Ascending aorta (tissue), 2 donors: ENCODE measurements at regions of chr3 and their contacts with region 1.

Region 1: GRCh38 chr3:113745273-113746068 is 578 bp downstream of the NAA50 start:
- DNase-seq: peak; percentile 59 to 88
- H3K4me3 ChIP-seq: peak overlapping the region; percentile 97 to 100
- H3K27ac ChIP-seq: peak overlapping the region; percentile 98 to 100
- H3K4me1 ChIP-seq: peaks cover 6 to 29% of the 10 kb centered on the region in 2 donors
- H3K27me3 ChIP-seq: no peaks in the 10 kb centered on the region
- CTCF ChIP-seq: peak; percentile 44 to 80 (median 65)

Region 2: DNA sequence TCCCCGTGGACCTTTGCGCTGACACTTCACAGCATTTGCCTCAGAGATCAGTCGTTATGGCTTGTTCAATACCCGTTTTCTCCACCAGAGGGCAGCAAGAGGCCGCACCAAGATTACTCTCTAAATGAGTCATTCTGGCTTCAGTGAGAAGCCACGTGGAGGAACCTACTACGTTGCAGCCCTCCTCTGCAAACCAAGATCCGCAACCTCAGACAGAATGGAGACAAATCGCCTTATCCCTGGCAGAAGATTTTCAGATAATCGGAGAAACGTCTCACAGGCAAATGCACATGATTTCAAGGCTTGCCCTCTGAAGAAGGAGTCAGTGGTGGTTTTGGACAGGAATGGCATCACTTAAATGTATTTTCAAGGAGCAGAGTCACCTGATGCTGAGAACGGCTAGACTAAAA is 694.2 kb before region 1 on chr3:
- intact Hi-C with region 1: loop called (anchors 10 kb)
- DNase-seq: peak; percentile 52 to 94
- H3K4me3 ChIP-seq: peak overlapping the region in 1 of 2 donors; percentile 27
- H3K27ac ChIP-seq: peak overlapping the region in 1 of 2 donors; percentile 14
- H3K4me1 ChIP-seq: peaks cover 0 to 6% of the 10 kb centered on the region in 2 donors
- H3K27me3 ChIP-seq: no peaks in the 10 kb centered on the region
- CTCF ChIP-seq: peak; percentile 90 to 93 (median 93)

Region 3: GRCh38 chr3:113696658-113697499 is 48.6 kb before region 1 on chr3:
- intact Hi-C with region 1: loop called (anchors 1 kb)
- DNase-seq: peak; percentile 98 to 100
- H3K4me3 ChIP-seq: peak overlapping the region; percentile 93 to 98
- H3K27ac ChIP-seq: peak overlapping the region; percentile 98 to 99
- H3K4me1 ChIP-seq: peaks cover 0 to 17% of the 10 kb centered on the region in 2 donors
- H3K27me3 ChIP-seq: no peaks in the 10 kb centered on the region
- CTCF ChIP-seq: peak in 1 of 3 experiments; percentile 22

Region 4: GRCh38 chr3:113764698-113765097 is 19.2 kb after region 1 on chr3:
- intact Hi-C with region 1: no loop called
- DNase-seq: no peak
- H3K4me3 ChIP-seq: no peak overlapping the region
- H3K27ac ChIP-seq: no peak overlapping the region
- H3K4me1 ChIP-seq: no peaks in the 10 kb centered on the region
- H3K27me3 ChIP-seq: no peaks in the 10 kb centered on the region
- CTCF ChIP-seq: no peak

Region 5: GRCh38 chr3:113947372-113948014 is 202.0 kb after region 1 on chr3 and contains the start of gene ZDHHC23:
- intact Hi-C with region 1: loop called (anchors 2 kb)
- DNase-seq: peak in 1 of 2 donors; percentile 85
- H3K4me3 ChIP-seq: peak within 1 kb of the TSS; percentile 70 to 82
- H3K27ac ChIP-seq: peak within 1 kb of the TSS; percentile 60 to 68
- H3K4me1 ChIP-seq: no peaks in the 10 kb centered on the region
- H3K27me3 ChIP-seq: no peaks in the 10 kb centered on the region
- CTCF ChIP-seq: no peak
- total RNA-seq, gene ZDHHC23: 4.4 TPM

Region 6: GRCh38 chr3:114152519-114153151 is 407.2 kb after region 1 on chr3:
- intact Hi-C with region 1: loop called (anchors 10 kb)
- DNase-seq: peak in 1 of 2 donors; percentile 84
- H3K4me3 ChIP-seq: peak overlapping the region; percentile 47 to 68
- H3K27ac ChIP-seq: peak overlapping the region; percentile 9 to 61
- H3K4me1 ChIP-seq: peaks cover 0 to 7% of the 10 kb centered on the region in 2 donors
- H3K27me3 ChIP-seq: no peaks in the 10 kb centered on the region
- CTCF ChIP-seq: peak; percentile 66 to 91 (median 86)